GM10248 (cell line): ENCODE measurements at regions of chr14 and their contacts with region 1.

Region 1: GRCh38 chr14:62126879-62127478 is 364.8 kb downstream of the SNAPC1 start:
- DNase-seq: peak; percentile 28
- CTCF ChIP-seq: peak; percentile 79

Region 2: GRCh38 chr14:61584331-61584741 is 542.6 kb before region 1 on chr14:
- CTCF ChIA-PET with region 1: no interaction called
- POLR2A ChIA-PET with region 1: no interaction called
- DNase-seq: no peak
- CTCF ChIP-seq: no peak

Region 3: GRCh38 chr14:61894452-61895077 is 232.4 kb before region 1 on chr14:
- CTCF ChIA-PET with region 1: interaction called, 78 read pairs
- POLR2A ChIA-PET with region 1: no interaction called
- DNase-seq: peak; percentile 66
- CTCF ChIP-seq: peak; percentile 79

Region 4: DNA sequence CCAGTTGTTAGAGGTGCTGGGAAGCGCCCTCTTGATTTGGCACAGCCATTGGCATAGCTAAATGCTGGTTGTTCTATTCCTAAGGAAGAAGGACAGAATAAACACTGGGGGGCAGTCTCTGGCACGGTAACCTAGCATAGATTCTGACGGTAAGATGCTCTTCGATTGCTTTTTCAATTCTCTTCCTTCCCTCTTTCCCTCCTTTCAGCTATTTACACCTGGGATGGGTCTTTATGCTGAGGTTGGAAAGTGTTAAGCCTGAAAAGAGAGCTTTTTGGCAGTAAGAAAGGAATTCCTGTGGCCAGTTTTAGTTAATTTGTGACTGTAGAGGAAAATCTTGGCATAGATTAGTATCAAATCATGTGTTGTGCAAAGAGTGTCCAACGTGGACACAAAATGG is 201.9 kb before region 1 on chr14:
- CTCF ChIA-PET with region 1: interaction called, 116 read pairs
- POLR2A ChIA-PET with region 1: no interaction called
- DNase-seq: peak; percentile 15
- CTCF ChIP-seq: peak; percentile 38

Region 5: DNA sequence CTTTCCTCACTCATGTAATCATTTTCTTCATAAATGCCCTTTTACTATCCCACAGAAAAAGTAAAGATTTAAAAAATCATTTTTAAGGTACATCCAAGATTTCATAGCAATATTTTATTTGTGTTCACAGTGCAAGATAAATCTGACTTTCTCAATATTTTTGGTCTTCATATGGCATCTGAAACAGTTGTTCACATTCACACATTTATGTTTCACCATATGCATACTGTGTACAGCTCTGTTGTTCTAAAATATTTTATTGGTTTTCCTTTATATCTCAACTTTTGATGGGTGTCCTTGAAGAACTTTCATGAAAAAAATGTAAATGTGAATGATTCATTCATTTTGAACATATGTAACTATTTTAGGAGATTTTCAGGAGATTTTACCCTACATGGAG is 16.0 kb before region 1 on chr14:
- CTCF ChIA-PET with region 1: interaction called, 84 read pairs
- POLR2A ChIA-PET with region 1: no interaction called
- DNase-seq: no peak
- CTCF ChIP-seq: no peak